ENCODE measurements at regions of chr17 and their contacts with region 1.

Region 1: DNA sequence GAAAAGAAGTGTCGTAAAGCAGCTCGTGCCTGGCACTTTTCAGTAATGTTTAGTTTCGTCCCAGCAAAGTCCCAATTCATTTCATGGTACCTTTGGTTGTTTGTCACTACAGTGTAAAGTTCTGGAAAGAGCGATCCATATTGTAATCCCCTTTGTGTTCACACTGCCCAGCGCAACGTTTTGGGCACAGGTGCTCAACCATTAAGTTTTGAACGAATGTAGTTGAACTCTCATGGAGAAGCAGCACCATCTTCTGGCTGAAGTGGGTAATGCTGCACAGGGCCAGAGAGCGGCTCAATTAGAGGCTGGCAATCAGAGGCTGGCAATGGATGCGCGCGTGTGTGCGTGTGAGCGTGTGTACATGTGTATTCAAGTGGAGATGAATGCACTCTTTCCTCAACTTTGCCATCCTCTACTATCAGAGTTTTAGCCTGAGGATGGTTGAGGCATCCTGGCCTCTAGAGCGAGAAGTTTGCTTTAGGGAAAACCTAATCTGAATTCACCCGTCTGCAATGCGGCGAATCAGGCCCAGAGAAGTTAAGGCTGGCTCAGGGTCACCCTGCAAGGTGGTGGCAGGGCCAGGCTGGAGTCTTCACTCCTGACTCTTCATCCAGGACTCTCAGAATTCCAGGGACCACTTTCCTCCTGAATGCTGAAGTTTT is 29.9 kb downstream of the DYNLL2 start:
- DNase-seq: peak; percentile 88
- ATAC-seq: peak; percentile 86
- H3K4me3 Mint-ChIP-seq: no peak overlapping the region
- H3K27ac Mint-ChIP-seq: no peak overlapping the region
- H3K4me1 Mint-ChIP-seq: peaks cover 1% of the 10 kb centered on the region
- H3K27me3 Mint-ChIP-seq: peaks cover 10% of the 10 kb centered on the region

Region 2: GRCh38 chr17:57892146-57892828 is 220.8 kb before region 1 on chr17:
- CTCF ChIA-PET with region 1: interaction called, 11 read pairs
- DNase-seq: peak; percentile 85
- ATAC-seq: peak; percentile 88
- H3K4me3 Mint-ChIP-seq: no peak overlapping the region
- H3K27ac Mint-ChIP-seq: no peak overlapping the region
- H3K4me1 Mint-ChIP-seq: peaks cover 13% of the 10 kb centered on the region
- H3K27me3 Mint-ChIP-seq: peaks cover 11% of the 10 kb centered on the region

Region 3: DNA sequence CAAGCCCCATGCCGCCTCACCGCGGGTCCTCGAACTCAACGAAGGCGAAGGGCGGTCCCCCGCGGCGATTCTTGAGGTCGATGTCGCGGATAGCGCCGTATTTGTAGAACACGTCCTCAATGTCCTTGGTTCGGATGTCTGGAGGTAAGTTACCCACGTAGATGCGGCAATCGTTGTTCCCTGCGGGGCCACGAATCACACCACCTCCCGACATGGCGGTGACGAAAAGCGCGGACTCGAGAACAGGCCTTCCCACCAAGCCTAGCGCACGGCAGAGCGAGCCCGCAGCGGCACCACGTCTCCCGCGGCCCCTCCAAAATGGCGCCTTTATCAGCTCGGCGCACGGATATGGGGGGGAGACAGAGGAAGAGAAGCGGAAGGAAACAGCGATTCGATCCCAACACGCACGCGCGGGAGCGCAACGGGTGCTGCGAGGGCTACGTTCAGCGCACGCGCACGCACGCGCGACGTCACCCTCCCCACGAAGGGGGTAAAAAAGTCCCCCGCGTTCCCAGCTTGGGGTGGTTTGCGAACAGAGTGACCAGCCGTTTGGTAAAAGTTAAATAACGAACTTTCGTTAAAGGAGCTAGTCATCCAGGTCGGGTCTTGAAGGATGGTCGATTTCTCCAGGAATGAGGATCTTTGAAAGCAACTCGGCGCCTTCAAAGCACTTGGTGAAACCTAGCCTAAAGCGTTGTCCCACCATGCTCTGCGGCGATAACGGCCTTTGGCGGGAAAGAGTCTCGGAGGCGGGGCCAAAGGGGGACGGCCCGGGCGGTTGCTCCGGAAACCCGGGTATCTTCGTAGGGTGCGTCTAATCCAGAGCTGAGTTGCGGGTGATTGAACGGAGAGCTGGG is 105.9 kb before region 1 on chr17 and contains the start of gene SRSF1:
- CTCF ChIA-PET with region 1: interaction called, 11 read pairs
- DNase-seq: peak; percentile 98
- ATAC-seq: peak; percentile 87
- H3K4me3 Mint-ChIP-seq: peak within 1 kb of the TSS; percentile 100
- H3K27ac Mint-ChIP-seq: peak within 1 kb of the TSS; percentile 100
- H3K4me1 Mint-ChIP-seq: peaks cover 42% of the 10 kb centered on the region
- H3K27me3 Mint-ChIP-seq: no peaks in the 10 kb centered on the region
- total RNA-seq, gene SRSF1: 365 to 418 TPM

Region 4: DNA sequence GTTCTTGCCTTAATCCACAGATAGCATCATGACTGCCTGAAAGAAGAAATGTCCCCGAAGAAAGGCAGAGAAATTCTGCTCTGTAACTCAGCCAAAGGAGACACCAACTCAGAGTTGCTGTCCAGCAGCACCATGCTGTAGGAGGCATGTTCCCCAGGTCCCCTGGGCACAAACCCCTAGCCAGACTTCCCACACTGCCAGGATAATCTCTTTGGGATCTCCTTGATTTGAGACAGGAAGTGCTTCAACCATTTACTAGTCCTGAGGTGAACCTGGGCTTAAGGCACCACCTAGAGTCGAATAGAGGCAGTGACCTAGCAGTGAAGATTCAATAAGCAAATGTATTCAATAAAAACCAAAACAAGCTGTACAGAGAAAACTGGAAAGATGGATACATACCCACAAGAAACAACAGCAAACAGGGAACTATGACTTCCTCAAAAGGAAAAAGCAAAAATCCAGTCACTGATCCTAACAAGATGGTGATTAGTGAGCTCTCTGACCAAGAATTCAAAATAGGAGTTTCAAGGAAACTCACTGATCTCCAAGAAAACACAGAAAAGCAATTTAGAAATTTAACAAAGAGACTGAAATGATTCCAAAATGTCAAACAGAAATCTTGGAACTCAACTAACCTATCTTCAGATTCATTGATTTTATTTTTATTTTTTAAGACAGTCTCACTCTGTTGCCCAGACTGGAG is 59.4 kb after region 1 on chr17:
- CTCF ChIA-PET with region 1: interaction called, 26 read pairs
- DNase-seq: peak; percentile 72
- ATAC-seq: peak; percentile 89
- H3K4me3 Mint-ChIP-seq: no peak overlapping the region
- H3K27ac Mint-ChIP-seq: no peak overlapping the region
- H3K4me1 Mint-ChIP-seq: peaks cover 21% of the 10 kb centered on the region
- H3K27me3 Mint-ChIP-seq: peaks cover 14% of the 10 kb centered on the region

Region 5: GRCh38 chr17:58329035-58329809 is 216.1 kb after region 1 on chr17:
- CTCF ChIA-PET with region 1: no interaction called
- DNase-seq: peak; percentile 94
- ATAC-seq: peak; percentile 25
- H3K4me3 Mint-ChIP-seq: peak overlapping the region; percentile 83
- H3K27ac Mint-ChIP-seq: peak overlapping the region; percentile 99
- H3K4me1 Mint-ChIP-seq: peaks cover 35% of the 10 kb centered on the region
- H3K27me3 Mint-ChIP-seq: peaks cover 3% of the 10 kb centered on the region

Measured in activated CD8-positive, alpha-beta memory T cell treated with anti-CD3 and anti-CD28 coated beads, Interleukin-2, amount 10 ng/mL, durations not matched to agents 7 days and 5 days (primary cell).